Heart right ventricle (tissue), 16 donors: ENCODE measurements at regions of chr5 and their contacts with region 1.

Region 1: DNA sequence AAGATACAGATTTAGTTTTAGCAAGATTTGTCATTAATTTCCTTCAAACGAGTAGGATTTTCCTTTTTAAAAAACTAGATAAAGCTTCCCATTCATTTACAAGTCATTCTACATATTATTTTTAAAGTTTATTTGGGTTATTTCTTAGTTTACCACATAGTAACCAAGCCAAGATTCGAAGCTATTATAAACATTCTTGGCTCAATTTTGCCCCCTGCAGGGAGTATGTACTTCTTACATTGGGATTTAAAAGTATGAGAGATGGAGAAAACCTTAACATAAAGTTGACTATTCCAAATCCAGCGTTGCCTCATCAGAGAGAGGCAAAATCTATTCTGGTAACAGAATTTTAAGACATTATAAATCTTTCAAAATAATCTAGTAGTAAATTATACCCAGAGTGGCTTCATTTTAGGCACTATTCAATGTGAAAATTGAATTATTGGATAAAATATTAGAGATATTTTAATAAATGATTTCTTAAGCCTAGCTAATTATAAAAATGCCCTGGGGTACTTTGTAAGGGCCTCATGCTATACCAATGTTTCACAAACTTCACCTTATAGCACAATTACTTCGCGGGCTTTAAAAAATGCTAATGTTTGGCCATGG is 39.1 kb downstream of the FBN2 start:
- DNase-seq: peak in 1 of 2 donors; percentile 17
- ATAC-seq: peak in 2 of 8 donors; percentile 55 to 66
- H3K4me3 ChIP-seq: no peak overlapping the region
- H3K27ac ChIP-seq: no peak overlapping the region
- H3K4me1 ChIP-seq: peaks cover 0 to 7% (median 0%) of the 10 kb centered on the region in 9 donors
- H3K27me3 ChIP-seq: no peaks in the 10 kb centered on the region
- CTCF ChIP-seq: peak; percentile 18 to 72 (median 56)

Region 2: GRCh38 chr5:128271873-128272446 is 227.0 kb before region 1 on chr5:
- intact Hi-C with region 1: loop called in 1 of 10 experiments (anchors 5 kb)
- DNase-seq: peak in 1 of 2 donors; percentile 58
- ATAC-seq: peak; percentile 87 to 100 (median 97)
- H3K4me3 ChIP-seq: peak overlapping the region in 8 of 10 donors; percentile 5 to 46 (median 29)
- H3K27ac ChIP-seq: peak overlapping the region in 7 of 10 donors; percentile 25 to 75 (median 54)
- H3K4me1 ChIP-seq: peaks cover 0 to 3% (median 0%) of the 10 kb centered on the region in 9 donors
- H3K27me3 ChIP-seq: no peaks in the 10 kb centered on the region
- CTCF ChIP-seq: no peak

Region 3: GRCh38 chr5:128349044-128349858 is 149.7 kb before region 1 on chr5:
- intact Hi-C with region 1: loop called in 1 of 10 experiments (anchors 10 kb)
- DNase-seq: peak in 1 of 2 donors; percentile 27
- ATAC-seq: peak in 5 of 8 donors; percentile 37 to 55 (median 49)
- H3K4me3 ChIP-seq: no peak overlapping the region
- H3K27ac ChIP-seq: peak overlapping the region in 1 of 10 donors; percentile 1
- H3K4me1 ChIP-seq: peaks cover 0 to 23% (median 0%) of the 10 kb centered on the region in 9 donors
- H3K27me3 ChIP-seq: no peaks in the 10 kb centered on the region
- CTCF ChIP-seq: no peak

Region 4: GRCh38 chr5:128395073-128395472 is 103.9 kb before region 1 on chr5:
- intact Hi-C with region 1: loop called in 1 of 10 experiments (anchors 10 kb)
- DNase-seq: no peak
- ATAC-seq: peak in 6 of 8 donors; percentile 71 to 94 (median 76)
- H3K4me3 ChIP-seq: no peak overlapping the region
- H3K27ac ChIP-seq: peak overlapping the region in 3 of 10 donors; percentile 9 to 41 (median 21)
- H3K4me1 ChIP-seq: peaks cover 0 to 5% (median 0%) of the 10 kb centered on the region in 9 donors
- H3K27me3 ChIP-seq: no peaks in the 10 kb centered on the region
- CTCF ChIP-seq: no peak